IMR-90 (cell line): ENCODE measurements at regions of chr9 and their contacts with region 1.

Region 1: GRCh38 chr9:117411548-117411947 is 3.3 kb downstream of the ASTN2 start:
- DNase-seq: peak; percentile 6
- ATAC-seq: no peak
- H3K4me3 ChIP-seq: no peak overlapping the region
- H3K27ac ChIP-seq: no peak overlapping the region
- H3K4me1 ChIP-seq: no peaks in the 10 kb centered on the region
- H3K27me3 ChIP-seq: peaks cover 34% of the 10 kb centered on the region
- CTCF ChIP-seq: peak; percentile 54
- POLR2A ChIP-seq: no peak
- RAD21 ChIP-seq: peak; percentile 54

Region 2: DNA sequence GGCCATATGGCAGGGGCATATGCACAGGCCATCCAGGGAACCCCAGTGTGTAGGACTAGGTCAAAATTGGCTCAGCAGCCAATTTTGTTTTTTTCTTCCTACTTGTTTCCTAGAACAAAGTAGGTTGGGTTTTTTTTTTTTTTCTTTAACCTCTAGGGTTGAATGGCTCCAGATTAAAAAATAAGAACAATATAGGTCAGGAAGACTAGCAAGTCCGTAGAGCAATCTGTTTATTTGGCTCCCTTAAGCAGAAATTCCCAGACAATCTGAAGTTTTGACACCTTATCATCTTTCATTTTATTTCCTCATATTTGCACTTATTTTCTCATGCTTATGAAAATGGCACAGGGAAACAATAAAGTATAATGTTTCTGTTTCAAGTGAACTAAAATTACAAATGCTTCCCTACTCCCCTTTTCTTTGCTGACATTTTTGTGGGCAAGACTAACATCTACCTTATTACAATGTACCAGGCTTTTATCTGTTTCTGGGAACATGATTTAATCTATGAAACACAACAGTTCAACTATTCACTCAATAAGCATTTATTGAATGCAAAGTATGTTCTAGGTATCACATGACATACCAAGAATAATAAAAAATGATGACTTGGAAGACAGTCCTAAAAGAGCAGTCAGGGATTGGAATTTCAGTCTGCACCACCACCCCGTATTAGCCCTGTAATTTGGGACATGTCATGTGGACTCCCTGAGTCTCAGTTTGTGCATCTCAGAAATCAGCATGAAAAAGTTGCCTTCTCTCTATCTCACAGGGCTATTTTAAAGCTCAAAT is 323.2 kb after region 1 on chr9:
- CTCF ChIA-PET with region 1: no interaction called
- POLR2A ChIA-PET with region 1: no interaction called
- dilution Hi-C with region 1: no loop called
- in situ Hi-C with region 1: no loop called
- intact Hi-C with region 1: loop called (anchors 5 kb)
- DNase-seq: no peak
- ATAC-seq: no peak
- H3K4me3 ChIP-seq: no peak overlapping the region
- H3K27ac ChIP-seq: no peak overlapping the region
- H3K4me1 ChIP-seq: no peaks in the 10 kb centered on the region
- H3K27me3 ChIP-seq: no peaks in the 10 kb centered on the region
- CTCF ChIP-seq: no peak
- POLR2A ChIP-seq: no peak
- RAD21 ChIP-seq: no peak